Calu3 (cell line): ENCODE measurements at regions of chr10 and their contacts with region 1.

Region 1: GRCh38 chr10:125982260-125982948 is 86.0 kb downstream of the FANK1 start:
- DNase-seq: peak; percentile 14
- H3K4me3 Mint-ChIP-seq: no peak overlapping the region
- H3K27ac Mint-ChIP-seq: no peak overlapping the region
- H3K4me1 Mint-ChIP-seq: peaks cover 12% of the 10 kb centered on the region
- H3K27me3 Mint-ChIP-seq: no peaks in the 10 kb centered on the region
- CTCF ChIP-seq: no peak

Region 2: GRCh38 chr10:126302826-126303665 is 320.6 kb after region 1 on chr10:
- CTCF ChIA-PET with region 1: no interaction called
- intact Hi-C with region 1: loop called (anchors 2 kb)
- DNase-seq: no peak
- H3K4me3 Mint-ChIP-seq: no peak overlapping the region
- H3K27ac Mint-ChIP-seq: no peak overlapping the region
- H3K4me1 Mint-ChIP-seq: no peaks in the 10 kb centered on the region
- H3K27me3 Mint-ChIP-seq: peaks cover 24% of the 10 kb centered on the region
- CTCF ChIP-seq: no peak